Endothelial cell of umbilical vein (primary cell): ENCODE measurements at regions of chr11 and their contacts with region 1.

Region 1: GRCh38 chr11:36376888-36377758 is 81.0 kb downstream of the PRR5L start:
- DNase-seq: peak; percentile 35
- H3K4me3 ChIP-seq: peak overlapping the region; percentile 53 to 74 (median 69)
- H3K27ac ChIP-seq: no peak overlapping the region
- H3K4me1 ChIP-seq: peaks cover 10% of the 10 kb centered on the region
- H3K27me3 ChIP-seq: peaks cover 19% of the 10 kb centered on the region in 2 experiments
- CTCF ChIP-seq: peak; percentile 75 to 81
- POLR2A ChIP-seq: no peak

Region 2: GRCh38 chr11:36306888-36307287 is 70.2 kb before region 1 on chr11:
- CTCF ChIA-PET with region 1: interaction called, 6 read pairs
- POLR2A ChIA-PET with region 1: no interaction called
- dilution Hi-C with region 1: no loop called
- intact Hi-C with region 1: loop called (anchors 1 kb)
- DNase-seq: no peak
- H3K4me3 ChIP-seq: no peak overlapping the region
- H3K27ac ChIP-seq: no peak overlapping the region
- H3K4me1 ChIP-seq: no peaks in the 10 kb centered on the region
- H3K27me3 ChIP-seq: peaks cover 0 to 2% of the 10 kb centered on the region in 2 experiments
- CTCF ChIP-seq: peak in 1 of 2 donors; percentile 29
- POLR2A ChIP-seq: no peak

Region 3: GRCh38 chr11:36405585-36406367 is 28.7 kb after region 1 on chr11:
- CTCF ChIA-PET with region 1: interaction called, 10 read pairs
- POLR2A ChIA-PET with region 1: interaction called, 3 read pairs
- dilution Hi-C with region 1: no loop called
- intact Hi-C with region 1: loop called (anchors 2 kb)
- DNase-seq: no peak
- H3K4me3 ChIP-seq: no peak overlapping the region
- H3K27ac ChIP-seq: no peak overlapping the region
- H3K4me1 ChIP-seq: peaks cover 32% of the 10 kb centered on the region
- H3K27me3 ChIP-seq: no peaks in the 10 kb centered on the region
- CTCF ChIP-seq: no peak
- POLR2A ChIP-seq: no peak

Region 4: GRCh38 chr11:36431429-36432092 is 54.4 kb after region 1 on chr11:
- CTCF ChIA-PET with region 1: interaction called, 9 read pairs
- POLR2A ChIA-PET with region 1: no interaction called
- dilution Hi-C with region 1: no loop called
- intact Hi-C with region 1: loop called (anchors 2 kb)
- DNase-seq: peak; percentile 78
- H3K4me3 ChIP-seq: no peak overlapping the region
- H3K27ac ChIP-seq: peak overlapping the region; percentile 43
- H3K4me1 ChIP-seq: peaks cover 11% of the 10 kb centered on the region
- H3K27me3 ChIP-seq: no peaks in the 10 kb centered on the region
- CTCF ChIP-seq: peak in 1 of 2 donors; percentile 8
- POLR2A ChIP-seq: no peak

Region 5: GRCh38 chr11:36478700-36479329 is 101.7 kb after region 1 on chr11:
- CTCF ChIA-PET with region 1: interaction called, 61 read pairs
- POLR2A ChIA-PET with region 1: no interaction called
- dilution Hi-C with region 1: no loop called
- intact Hi-C with region 1: loop called (anchors 1 kb)
- DNase-seq: peak; percentile 60
- H3K4me3 ChIP-seq: no peak overlapping the region
- H3K27ac ChIP-seq: no peak overlapping the region
- H3K4me1 ChIP-seq: no peaks in the 10 kb centered on the region
- H3K27me3 ChIP-seq: no peaks in the 10 kb centered on the region
- CTCF ChIP-seq: peak; percentile 47 to 50
- POLR2A ChIP-seq: no peak